Activated T-helper 2 cell treated with anti-CD3 and anti-CD28 coated beads, Interferon-gamma antibody, Interleukin-2, Interleukin-4, amounts not matched to agents 10 μg/mL and 5 μg/mL and 100 μg/mL, durations not matched to agents 14 hours and 24 hours and 36 hours (primary cell): ENCODE measurements at regions of chr11 and their contacts with region 1.

Region 1: DNA sequence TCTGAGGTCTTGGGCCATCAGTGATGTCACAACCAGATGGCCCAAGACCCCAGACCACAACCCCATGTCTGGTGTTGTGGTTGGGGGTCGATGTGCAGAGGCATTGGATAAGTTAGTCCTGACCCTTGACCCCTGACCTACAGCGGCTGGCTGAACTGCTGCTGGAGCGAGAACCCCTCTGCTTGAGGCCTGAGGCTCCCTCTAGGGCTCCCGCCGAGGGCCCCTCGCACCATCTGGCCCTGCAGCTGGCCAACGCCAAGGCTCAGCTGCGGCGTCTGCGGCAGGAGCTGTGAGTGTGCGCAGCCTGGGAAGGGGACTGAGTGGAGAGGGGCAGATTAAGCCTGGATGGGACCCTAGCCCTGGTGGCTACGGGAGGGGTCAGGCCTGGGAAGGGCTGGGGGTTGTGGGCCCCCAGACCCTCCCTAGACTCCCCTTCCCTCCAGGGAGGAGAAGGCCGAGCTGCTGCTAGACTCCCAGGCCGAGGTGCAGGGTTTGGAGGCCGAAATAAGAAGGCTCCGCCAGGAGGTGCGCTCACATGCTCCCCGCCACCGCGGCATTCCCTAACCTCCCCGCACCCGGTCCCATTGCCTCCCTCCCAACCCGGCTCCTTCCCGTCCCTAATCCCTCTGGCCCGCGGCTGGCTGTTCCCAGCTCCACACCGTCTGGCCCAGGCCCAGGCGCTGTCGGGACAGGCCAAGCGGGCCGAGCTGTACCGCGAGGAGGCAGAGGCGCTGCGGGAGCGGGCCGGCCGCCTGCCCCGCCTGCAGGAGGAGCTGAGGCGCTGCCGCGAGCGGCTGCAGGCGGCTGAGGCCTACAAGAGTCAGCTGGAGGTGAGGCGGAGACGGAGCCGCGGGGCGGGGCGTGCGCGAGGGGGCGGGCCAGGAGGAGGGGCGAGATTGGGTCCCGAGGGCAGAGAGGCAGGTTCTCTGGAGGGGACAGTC is 2.1 kb downstream of the CCDC88B start:
- DNase-seq: peak; percentile 91
- H3K4me3 Mint-ChIP-seq: peak overlapping the region; percentile 26
- H3K27ac Mint-ChIP-seq: no peak overlapping the region
- H3K4me1 Mint-ChIP-seq: peaks cover 26% of the 10 kb centered on the region
- H3K27me3 Mint-ChIP-seq: no peaks in the 10 kb centered on the region

Region 2: GRCh38 chr11:64028398-64029115 is 313.6 kb before region 1 on chr11:
- intact Hi-C with region 1: no loop called
- DNase-seq: no peak
- H3K4me3 Mint-ChIP-seq: no peak overlapping the region
- H3K27ac Mint-ChIP-seq: no peak overlapping the region
- H3K4me1 Mint-ChIP-seq: no peaks in the 10 kb centered on the region
- H3K27me3 Mint-ChIP-seq: peaks cover 16% of the 10 kb centered on the region

Region 3: GRCh38 chr11:64263021-64263946 is 78.8 kb before region 1 on chr11:
- intact Hi-C with region 1: no loop called
- DNase-seq: no peak
- H3K4me3 Mint-ChIP-seq: no peak overlapping the region
- H3K27ac Mint-ChIP-seq: no peak overlapping the region
- H3K4me1 Mint-ChIP-seq: peaks cover 10% of the 10 kb centered on the region
- H3K27me3 Mint-ChIP-seq: no peaks in the 10 kb centered on the region

Region 4: DNA sequence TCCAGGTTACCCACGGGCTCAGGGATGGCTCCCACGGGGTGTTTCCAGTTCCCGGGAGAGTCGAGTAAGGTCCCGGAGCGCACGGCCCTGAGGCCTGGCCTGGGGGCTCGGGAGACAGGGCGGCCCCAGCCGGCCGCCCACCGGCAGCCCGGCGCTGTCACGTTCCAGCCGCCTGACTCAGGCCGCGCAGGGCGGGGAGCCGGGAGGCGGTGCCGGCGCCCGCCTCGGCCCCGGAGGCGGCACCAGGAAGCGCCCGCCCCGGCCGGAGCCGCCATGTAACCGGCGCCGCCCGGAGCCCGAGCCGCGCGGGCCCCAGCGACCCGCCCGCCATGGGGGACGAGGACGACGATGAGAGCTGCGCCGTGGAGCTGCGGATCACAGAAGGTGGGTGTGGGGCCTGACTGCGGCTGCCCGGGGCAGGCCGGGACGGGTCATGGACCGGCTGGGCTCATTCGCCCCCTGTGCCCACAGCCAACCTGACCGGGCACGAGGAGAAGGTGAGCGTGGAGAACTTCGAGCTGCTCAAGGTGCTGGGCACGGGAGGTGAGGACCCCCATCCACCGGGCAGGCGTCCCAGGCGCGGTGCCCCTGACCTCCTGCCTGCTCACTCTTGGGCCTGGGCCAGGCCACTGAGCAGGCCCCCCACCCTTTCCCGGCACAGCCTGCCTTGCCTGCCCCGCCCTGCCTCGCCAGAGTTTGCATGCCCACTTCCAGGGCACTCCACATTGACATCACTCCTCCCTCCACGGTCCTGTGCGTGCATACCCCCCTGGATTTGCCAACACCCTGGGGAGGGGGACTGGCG is 17.0 kb after region 1 on chr11 and contains the start of gene RPS6KA4:
- intact Hi-C with region 1: loop called (anchors 2 kb)
- DNase-seq: peak; percentile 54
- H3K4me3 Mint-ChIP-seq: peak within 1 kb of the TSS; percentile 91
- H3K27ac Mint-ChIP-seq: peak within 1 kb of the TSS; percentile 83
- H3K4me1 Mint-ChIP-seq: peaks cover 21% of the 10 kb centered on the region
- H3K27me3 Mint-ChIP-seq: no peaks in the 10 kb centered on the region
- total RNA-seq, gene RPS6KA4: 38.7 and 43.7 TPM in 2 replicates